Thyroid gland (tissue), 4 donors: ENCODE measurements at regions of chr19 and their contacts with region 1.

Region 1: DNA sequence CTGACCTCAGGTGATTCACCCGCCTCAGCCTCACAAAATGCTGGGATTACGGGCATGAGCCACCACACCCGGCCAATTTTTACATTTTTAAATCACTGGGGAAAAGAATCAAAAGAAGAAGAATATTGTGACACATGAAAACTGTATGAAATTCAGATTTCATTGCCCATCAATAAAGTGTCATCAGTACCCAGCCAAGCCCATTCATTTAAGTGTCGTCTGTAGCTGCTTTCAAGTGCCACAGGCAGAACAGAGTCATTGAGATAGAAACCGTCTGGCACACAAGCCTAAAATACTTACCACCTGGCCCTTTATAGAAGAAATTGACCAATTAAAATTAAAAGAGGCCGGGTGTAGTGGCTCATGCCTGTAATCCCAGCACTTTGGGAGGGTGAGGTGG is 15.3 kb downstream of the COLGALT1 start:
- DNase-seq: no peak
- H3K4me3 ChIP-seq: no peak overlapping the region
- H3K27ac ChIP-seq: no peak overlapping the region
- H3K4me1 ChIP-seq: no peaks in the 10 kb centered on the region
- H3K27me3 ChIP-seq: no peaks in the 10 kb centered on the region
- CTCF ChIP-seq: no peak
- POLR2A ChIP-seq: no peak

Region 2: DNA sequence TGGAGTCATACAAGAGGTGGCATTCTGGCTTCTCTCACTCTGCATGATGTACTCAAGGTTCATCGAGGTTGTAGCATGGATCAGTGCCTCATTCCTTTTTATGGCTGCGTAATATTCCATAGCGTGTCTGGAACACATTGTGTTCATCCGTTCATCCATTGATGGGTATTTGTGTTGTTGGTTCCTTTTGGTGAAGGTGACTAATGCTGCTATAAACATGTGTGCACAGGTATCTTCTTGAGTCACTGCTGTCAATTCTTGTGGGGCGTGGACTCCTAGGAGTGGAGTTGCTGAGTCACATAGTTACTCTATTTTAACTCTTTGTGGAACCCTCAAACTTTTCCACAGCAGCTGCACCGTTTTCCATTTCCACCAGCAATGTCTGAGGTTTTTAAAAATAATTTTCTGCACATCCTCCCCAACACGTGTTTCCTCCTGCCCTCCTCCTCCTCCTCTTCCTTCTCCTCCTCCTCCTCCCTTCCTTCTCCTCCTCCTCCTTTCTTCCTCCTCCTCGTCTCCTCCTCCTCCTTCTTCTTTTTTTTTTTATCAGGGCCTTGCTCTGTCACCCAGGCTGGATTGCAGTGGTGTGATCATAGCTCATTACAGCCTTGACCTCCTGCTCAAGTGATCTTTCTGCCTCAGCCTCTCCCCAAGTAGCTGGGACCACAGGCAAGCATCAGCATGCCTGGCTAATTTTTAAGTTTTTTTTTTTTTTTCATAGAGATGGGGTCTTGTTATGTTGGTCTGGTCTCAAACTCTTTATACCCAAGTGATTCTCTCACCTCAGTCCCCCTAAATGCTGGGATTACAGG is 120.3 kb before region 1 on chr19:
- intact Hi-C with region 1: loop called (anchors 5 kb)
- DNase-seq: no peak
- H3K4me3 ChIP-seq: no peak overlapping the region
- H3K27ac ChIP-seq: no peak overlapping the region
- H3K4me1 ChIP-seq: peaks cover 6 to 13% of the 10 kb centered on the region in 2 donors
- H3K27me3 ChIP-seq: peaks cover 10% of the 10 kb centered on the region
- CTCF ChIP-seq: no peak
- POLR2A ChIP-seq: no peak